Common myeloid progenitor, CD34-positive (primary cell): ENCODE measurements at regions of chr10 and their contacts with region 1.

Region 1: DNA sequence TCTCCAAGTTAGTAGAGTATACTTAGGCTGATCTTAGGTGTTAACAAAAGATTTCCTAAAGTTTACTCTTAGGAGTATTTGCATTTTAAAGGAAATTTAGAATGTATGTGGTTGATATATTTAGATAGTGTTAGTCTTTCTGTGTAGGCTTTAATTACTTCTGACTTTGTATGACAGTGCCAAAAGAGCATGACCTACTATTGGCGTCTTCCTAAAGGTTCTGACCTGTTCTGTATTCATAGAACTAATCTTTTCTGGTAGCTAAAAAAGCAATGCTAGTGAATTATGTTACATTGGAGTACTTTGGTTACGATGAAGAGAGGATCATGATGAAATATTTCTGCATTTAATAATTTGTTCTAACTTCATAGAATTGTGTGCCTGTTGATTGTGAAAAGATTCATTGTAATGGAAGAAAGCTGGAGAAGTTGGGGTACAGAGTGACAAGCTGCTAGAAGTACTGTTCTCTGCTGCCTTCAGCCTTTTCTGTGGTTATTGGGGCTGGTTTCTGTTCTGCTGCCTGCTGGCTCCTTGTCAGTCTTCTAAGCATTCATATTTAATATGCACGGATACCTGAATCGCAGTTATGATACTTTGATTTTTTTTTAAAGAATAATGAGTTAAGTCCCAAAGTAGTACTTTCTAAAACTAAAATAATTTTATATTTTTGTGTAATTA is 13.2 kb downstream of the WAC start:
- DNase-seq: no peak
- H3K4me3 ChIP-seq: no peak overlapping the region
- H3K27ac ChIP-seq: no peak overlapping the region
- H3K4me1 ChIP-seq: peaks cover 0 to 1% (median 0%) of the 10 kb centered on the region in 4 experiments
- H3K27me3 ChIP-seq: no peaks in the 10 kb centered on the region

Region 2: DNA sequence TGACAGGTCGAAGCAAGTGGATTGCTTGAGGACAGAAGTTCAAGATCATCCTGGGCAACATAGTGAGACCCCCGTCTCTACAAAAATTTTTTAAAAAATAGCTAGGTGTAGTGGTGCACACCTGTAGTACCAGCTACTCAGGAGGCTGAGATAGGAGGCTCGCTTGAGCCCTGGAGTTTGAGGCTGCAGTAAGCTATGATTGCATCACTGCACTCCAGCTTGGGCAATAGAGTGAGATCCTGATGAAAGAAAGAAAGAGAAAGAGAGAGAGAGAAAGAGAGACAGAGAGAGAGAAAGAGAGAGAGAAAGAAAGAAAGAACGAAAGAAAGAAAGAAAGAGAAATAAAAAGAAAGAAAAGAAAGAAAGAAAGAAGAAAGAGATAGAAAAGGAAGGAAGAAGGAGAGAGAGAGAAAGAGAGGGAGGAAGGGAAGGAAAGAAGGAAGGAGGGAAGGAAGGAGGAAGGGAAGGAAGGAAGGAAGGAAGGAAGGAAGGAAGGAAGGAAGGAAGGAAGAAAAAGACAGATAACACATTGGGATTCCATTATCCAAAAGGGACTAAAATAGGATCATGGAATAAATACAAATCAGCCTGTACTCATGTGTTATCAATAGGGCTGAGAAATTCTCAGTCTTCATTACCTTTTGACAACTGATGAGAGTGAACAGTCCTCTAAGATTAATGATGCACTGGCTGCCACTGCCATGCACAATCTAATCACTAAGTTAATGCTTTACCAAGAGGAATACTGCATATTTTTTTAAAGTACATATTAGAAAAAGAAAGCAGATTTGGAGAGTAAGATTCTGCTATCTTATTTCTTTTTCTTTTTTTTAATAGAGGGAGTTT is 48.6 kb before region 1 on chr10:
- CTCF ChIA-PET with region 1: no interaction called
- POLR2A ChIA-PET with region 1: interaction called, 11 read pairs
- DNase-seq: no peak
- H3K4me3 ChIP-seq: no peak overlapping the region
- H3K27ac ChIP-seq: no peak overlapping the region
- H3K4me1 ChIP-seq: peaks cover 0 to 18% (median 3%) of the 10 kb centered on the region in 4 experiments
- H3K27me3 ChIP-seq: no peaks in the 10 kb centered on the region

Region 3: GRCh38 chr10:28520346-28520745 is 25.8 kb before region 1 on chr10:
- CTCF ChIA-PET with region 1: no interaction called
- POLR2A ChIA-PET with region 1: no interaction called
- DNase-seq: no peak
- H3K4me3 ChIP-seq: no peak overlapping the region
- H3K27ac ChIP-seq: no peak overlapping the region
- H3K4me1 ChIP-seq: peaks cover 0 to 5% (median 0%) of the 10 kb centered on the region in 4 experiments
- H3K27me3 ChIP-seq: no peaks in the 10 kb centered on the region

Region 4: GRCh38 chr10:28533571-28534304 is 12.4 kb before region 1 on chr10:
- CTCF ChIA-PET with region 1: interaction called, 22 read pairs
- POLR2A ChIA-PET with region 1: interaction called, 7 read pairs
- DNase-seq: peak; percentile 50 to 67 (median 64)
- H3K4me3 ChIP-seq: peak overlapping the region; percentile 79 to 99 (median 91)
- H3K27ac ChIP-seq: peak overlapping the region; percentile 94 to 96
- H3K4me1 ChIP-seq: peaks cover 12 to 35% (median 18%) of the 10 kb centered on the region in 4 experiments
- H3K27me3 ChIP-seq: no peaks in the 10 kb centered on the region

Region 5: DNA sequence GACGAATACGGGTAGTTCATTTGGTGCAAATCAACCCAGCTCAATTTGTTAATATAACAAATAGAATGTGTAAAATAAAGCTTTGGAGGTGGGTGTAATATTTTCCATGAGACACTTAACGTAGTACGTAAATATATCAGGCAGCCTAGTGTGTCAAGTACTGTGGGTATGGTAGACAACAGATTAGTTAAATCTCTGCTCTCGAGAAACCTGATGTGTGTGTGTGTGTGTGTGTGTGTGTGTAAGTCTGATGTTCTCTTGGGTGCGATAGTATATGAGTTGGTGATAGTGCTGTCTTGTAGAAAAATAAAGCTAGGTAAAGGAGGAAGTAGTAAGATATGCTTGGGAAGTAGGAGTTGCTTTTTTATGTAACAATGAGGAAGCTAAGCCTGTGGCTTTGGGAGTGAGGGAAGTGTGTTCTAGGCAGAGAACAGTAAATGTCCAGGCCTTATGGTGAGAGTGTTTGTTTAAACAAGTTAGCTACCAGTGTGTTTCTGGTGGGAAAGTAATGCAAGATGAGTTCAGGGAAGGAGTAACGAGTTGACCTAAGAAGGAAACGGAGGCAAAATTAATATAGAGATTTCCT is 12.9 kb after region 1 on chr10:
- CTCF ChIA-PET with region 1: interaction called, 21 read pairs
- POLR2A ChIA-PET with region 1: no interaction called
- DNase-seq: peak; percentile 10 to 46 (median 21)
- H3K4me3 ChIP-seq: no peak overlapping the region
- H3K27ac ChIP-seq: no peak overlapping the region
- H3K4me1 ChIP-seq: peaks cover 7 to 17% (median 10%) of the 10 kb centered on the region in 4 experiments
- H3K27me3 ChIP-seq: no peaks in the 10 kb centered on the region

Region 6: GRCh38 chr10:28663576-28664313 is 117.6 kb after region 1 on chr10:
- CTCF ChIA-PET with region 1: no interaction called
- POLR2A ChIA-PET with region 1: no interaction called
- DNase-seq: peak; percentile 73 to 87 (median 85)
- H3K4me3 ChIP-seq: no peak overlapping the region
- H3K27ac ChIP-seq: no peak overlapping the region
- H3K4me1 ChIP-seq: peaks cover 0 to 7% (median 5%) of the 10 kb centered on the region in 4 experiments
- H3K27me3 ChIP-seq: peaks cover 0 to 38% (median 15%) of the 10 kb centered on the region in 5 experiments